Breast epithelium (tissue), 4 donors: ENCODE measurements at regions of chr1 and their contacts with region 1.

Region 1: DNA sequence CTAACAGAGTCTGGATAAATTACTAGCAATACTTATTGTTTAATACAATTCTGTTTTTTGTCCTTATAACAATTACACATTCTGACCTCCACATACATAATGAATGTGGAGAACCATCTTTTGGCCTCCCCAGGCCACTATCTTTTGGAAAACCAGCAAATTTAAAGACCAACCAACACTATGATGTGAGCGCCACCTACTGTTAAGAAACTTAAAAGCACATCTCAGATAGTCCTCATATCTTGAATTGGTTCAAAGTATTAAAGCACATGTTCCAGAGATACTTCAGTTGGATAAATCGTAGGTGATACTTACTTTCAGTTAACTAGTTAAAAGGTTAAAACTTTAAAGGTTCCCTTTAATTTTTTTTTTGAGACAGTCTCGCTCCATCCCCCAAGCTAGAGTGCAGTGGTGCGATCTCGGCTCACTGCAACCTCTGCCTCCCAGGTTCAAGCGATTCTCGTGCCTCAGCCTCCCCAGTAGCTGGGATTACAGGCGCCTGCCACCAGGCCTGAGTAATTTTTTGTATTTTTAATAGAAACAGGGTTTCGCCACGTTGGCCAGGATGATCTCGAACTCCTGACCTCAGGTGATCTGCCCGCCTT is 29.3 kb upstream of the USP1 start:
- DNase-seq: no peak
- H3K4me3 ChIP-seq: no peak overlapping the region
- H3K27ac ChIP-seq: no peak overlapping the region
- H3K4me1 ChIP-seq: no peaks in the 10 kb centered on the region
- H3K27me3 ChIP-seq: no peaks in the 10 kb centered on the region
- CTCF ChIP-seq: peak; percentile 30 to 85 (median 70)
- POLR2A ChIP-seq: no peak

Region 2: DNA sequence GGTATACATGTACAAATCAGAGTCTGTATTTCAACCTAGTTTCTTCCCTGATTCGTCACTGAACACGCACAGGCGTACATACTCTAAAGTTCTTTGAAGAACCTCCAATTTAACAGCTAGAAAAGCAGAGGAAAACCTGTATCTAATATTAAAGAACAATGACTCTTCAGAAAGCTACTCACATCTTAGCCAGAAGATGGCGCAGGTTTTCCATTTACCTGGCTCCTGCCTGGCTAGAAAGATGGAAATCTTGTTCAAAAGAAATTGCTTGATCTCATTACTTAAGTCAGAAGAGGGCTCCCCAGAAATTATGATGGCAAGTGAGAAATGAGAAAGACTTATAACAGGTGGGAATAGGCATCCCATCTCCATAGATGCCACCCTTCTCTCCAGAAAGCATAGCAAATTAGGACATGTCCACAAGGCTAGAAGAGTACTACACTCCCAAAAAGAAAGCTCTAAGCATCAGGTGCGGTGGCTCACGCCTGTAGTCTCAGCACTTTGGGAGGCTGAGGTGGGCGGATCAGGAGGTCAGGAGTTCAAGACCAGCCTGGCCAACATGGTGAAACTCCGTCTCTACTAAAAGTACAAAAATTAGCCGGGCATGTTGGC is 231.8 kb before region 1 on chr1:
- intact Hi-C with region 1: loop called (anchors 10 kb)
- DNase-seq: no peak
- H3K4me3 ChIP-seq: no peak overlapping the region
- H3K27ac ChIP-seq: no peak overlapping the region
- H3K4me1 ChIP-seq: no peaks in the 10 kb centered on the region
- H3K27me3 ChIP-seq: no peaks in the 10 kb centered on the region
- CTCF ChIP-seq: peak; percentile 59 to 81 (median 74)
- POLR2A ChIP-seq: no peak

Region 3: GRCh38 chr1:63731117-63732043 is 1323.9 kb after region 1 on chr1:
- intact Hi-C with region 1: no loop called
- DNase-seq: no peak
- H3K4me3 ChIP-seq: peak overlapping the region in 1 of 3 donors; percentile 28
- H3K27ac ChIP-seq: peak overlapping the region in 1 of 2 donors; percentile 32
- H3K4me1 ChIP-seq: no peaks in the 10 kb centered on the region
- H3K27me3 ChIP-seq: no peaks in the 10 kb centered on the region
- CTCF ChIP-seq: no peak
- POLR2A ChIP-seq: no peak